ENCODE measurements at regions of chr20 and their contacts with region 1.

Region 1: DNA sequence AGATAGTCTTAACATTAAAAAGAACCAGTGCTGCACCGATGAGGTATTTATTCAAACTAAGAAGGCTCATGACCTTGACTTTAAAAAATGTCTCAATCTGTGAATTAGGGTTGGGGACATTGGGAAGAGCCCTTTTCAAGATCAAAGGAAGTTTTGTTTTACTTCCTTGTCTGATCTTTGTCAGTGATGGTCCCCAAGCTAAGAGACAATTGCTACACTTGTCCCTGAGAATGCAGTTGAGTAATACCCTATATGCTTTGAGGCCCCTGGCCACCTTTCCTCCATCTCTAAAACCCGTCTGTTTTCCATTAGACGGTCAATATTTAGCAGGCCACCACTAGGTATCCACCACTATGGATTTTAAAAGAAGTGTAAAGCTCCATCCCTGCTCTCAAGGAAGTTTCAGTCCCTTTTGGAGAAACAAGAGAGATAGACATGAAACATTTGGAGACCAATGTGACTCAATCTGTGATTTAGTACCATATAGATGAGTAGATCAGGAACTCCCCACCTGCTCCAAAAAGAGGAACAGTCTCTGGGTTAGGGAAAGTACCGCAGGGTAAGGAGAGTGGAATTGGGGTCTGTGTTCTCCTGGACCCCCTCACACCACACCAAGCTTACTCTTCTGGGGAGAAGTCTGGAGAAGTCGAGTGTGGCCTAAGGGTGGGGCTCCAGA is 99.1 kb upstream of the ISM1 start:
- DNase-seq: no peak
- H3K4me3 ChIP-seq: no peak overlapping the region
- H3K27ac ChIP-seq: no peak overlapping the region
- H3K4me1 ChIP-seq: no peaks in the 10 kb centered on the region
- H3K27me3 ChIP-seq: no peaks in the 10 kb centered on the region
- CTCF ChIP-seq: no peak
- POLR2A ChIP-seq: no peak

Region 2: GRCh38 chr20:13302647-13303450 is 180.9 kb after region 1 on chr20:
- intact Hi-C with region 1: loop called (anchors 10 kb)
- DNase-seq: no peak
- H3K4me3 ChIP-seq: no peak overlapping the region
- H3K27ac ChIP-seq: no peak overlapping the region
- H3K4me1 ChIP-seq: no peaks in the 10 kb centered on the region
- H3K27me3 ChIP-seq: no peaks in the 10 kb centered on the region
- CTCF ChIP-seq: peak in 4 of 6 experiments; percentile 34 to 69 (median 47)
- POLR2A ChIP-seq: no peak

Region 3: DNA sequence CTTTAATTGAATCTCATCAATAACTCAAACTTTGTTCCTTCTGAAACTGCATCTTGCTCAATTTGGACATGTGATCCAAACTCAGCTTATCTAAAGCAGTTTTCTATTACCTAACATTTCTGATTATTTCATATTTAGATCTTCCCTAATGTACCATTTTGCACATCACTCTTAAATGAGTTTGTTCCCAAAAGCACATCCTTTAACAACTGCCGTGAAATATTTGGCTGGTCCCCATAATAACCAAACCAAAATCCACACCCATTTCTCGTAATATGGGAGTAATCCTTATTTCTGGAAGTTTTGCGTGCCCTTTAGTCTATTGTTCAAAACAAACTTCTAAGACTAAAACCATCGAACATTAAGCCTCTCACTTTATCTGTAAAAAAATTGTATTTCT is 421.8 kb after region 1 on chr20:
- intact Hi-C with region 1: loop called (anchors 5 kb)
- DNase-seq: no peak
- H3K4me3 ChIP-seq: no peak overlapping the region
- H3K27ac ChIP-seq: no peak overlapping the region
- H3K4me1 ChIP-seq: no peaks in the 10 kb centered on the region
- H3K27me3 ChIP-seq: no peaks in the 10 kb centered on the region
- CTCF ChIP-seq: no peak
- POLR2A ChIP-seq: no peak

Measured in esophagus squamous epithelium (tissue), 5 donors.